ENCODE measurements at regions of chr17 and their contacts with region 1.

Region 1: DNA sequence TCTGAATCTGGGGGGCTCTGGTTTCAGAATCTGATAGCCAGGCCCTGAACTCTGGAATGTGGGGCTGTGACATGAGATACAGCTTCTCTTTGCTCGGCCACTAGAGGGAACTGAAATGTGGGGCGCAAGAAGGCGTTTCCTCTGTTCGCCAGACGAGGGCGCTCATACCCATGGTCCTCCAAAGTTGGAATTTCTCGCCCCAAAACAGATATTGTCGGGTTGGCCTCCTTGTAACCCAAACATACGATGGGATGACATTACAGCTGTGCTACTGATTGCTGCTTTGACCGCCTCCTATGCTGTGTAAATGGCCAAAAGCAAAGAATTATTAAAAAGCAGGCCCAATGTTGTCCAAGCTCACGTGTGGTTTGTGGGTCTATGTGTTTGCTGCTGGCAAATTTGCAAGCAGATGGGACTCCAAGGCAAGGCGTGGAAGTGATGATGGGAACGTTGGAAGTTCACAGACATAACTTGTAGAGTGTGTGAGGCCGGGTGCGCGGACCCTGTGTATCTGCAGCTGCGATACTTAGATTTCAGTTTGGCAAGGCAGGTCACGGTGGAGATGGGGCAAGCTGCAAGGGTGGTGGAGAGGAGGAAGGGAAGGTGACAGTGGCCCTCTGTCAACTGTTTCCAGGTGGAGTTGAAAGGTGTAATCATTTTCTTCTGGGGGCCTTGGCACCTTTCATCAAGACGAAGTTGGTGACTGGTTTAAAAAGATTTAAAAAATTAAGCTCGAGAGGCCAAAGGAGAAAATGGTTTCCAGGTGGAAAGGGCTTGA is 13.0 kb upstream of the MSI2 start:
- DNase-seq: peak; percentile 81
- ATAC-seq: peak; percentile 85
- H3K4me3 Mint-ChIP-seq: no peak overlapping the region
- H3K27ac Mint-ChIP-seq: no peak overlapping the region
- H3K4me1 Mint-ChIP-seq: peaks cover 6% of the 10 kb centered on the region
- H3K27me3 Mint-ChIP-seq: peaks cover 23% of the 10 kb centered on the region

Region 2: GRCh38 chr17:57186226-57187019 is 56.9 kb before region 1 on chr17:
- CTCF ChIA-PET with region 1: no interaction called
- DNase-seq: no peak
- ATAC-seq: no peak
- H3K4me3 Mint-ChIP-seq: no peak overlapping the region
- H3K27ac Mint-ChIP-seq: no peak overlapping the region
- H3K4me1 Mint-ChIP-seq: no peaks in the 10 kb centered on the region
- H3K27me3 Mint-ChIP-seq: peaks cover 10% of the 10 kb centered on the region

Region 3: GRCh38 chr17:57282296-57282695 is 38.9 kb after region 1 on chr17:
- CTCF ChIA-PET with region 1: interaction called, 19 read pairs
- DNase-seq: no peak
- ATAC-seq: no peak
- H3K4me3 Mint-ChIP-seq: peak overlapping the region; percentile 6
- H3K27ac Mint-ChIP-seq: peak overlapping the region; percentile 72
- H3K4me1 Mint-ChIP-seq: peaks cover 86% of the 10 kb centered on the region
- H3K27me3 Mint-ChIP-seq: no peaks in the 10 kb centered on the region

Region 4: GRCh38 chr17:57408071-57408811 is 164.9 kb after region 1 on chr17:
- CTCF ChIA-PET with region 1: interaction called, 33 read pairs
- DNase-seq: peak; percentile 61
- ATAC-seq: peak; percentile 78
- H3K4me3 Mint-ChIP-seq: peak overlapping the region; percentile 11
- H3K27ac Mint-ChIP-seq: peak overlapping the region; percentile 10
- H3K4me1 Mint-ChIP-seq: peaks cover 35% of the 10 kb centered on the region
- H3K27me3 Mint-ChIP-seq: no peaks in the 10 kb centered on the region

Region 5: GRCh38 chr17:57498443-57498842 is 255.1 kb after region 1 on chr17:
- CTCF ChIA-PET with region 1: interaction called, 11 read pairs
- DNase-seq: no peak
- ATAC-seq: no peak
- H3K4me3 Mint-ChIP-seq: no peak overlapping the region
- H3K27ac Mint-ChIP-seq: no peak overlapping the region
- H3K4me1 Mint-ChIP-seq: peaks cover 4% of the 10 kb centered on the region
- H3K27me3 Mint-ChIP-seq: no peaks in the 10 kb centered on the region

Region 6: DNA sequence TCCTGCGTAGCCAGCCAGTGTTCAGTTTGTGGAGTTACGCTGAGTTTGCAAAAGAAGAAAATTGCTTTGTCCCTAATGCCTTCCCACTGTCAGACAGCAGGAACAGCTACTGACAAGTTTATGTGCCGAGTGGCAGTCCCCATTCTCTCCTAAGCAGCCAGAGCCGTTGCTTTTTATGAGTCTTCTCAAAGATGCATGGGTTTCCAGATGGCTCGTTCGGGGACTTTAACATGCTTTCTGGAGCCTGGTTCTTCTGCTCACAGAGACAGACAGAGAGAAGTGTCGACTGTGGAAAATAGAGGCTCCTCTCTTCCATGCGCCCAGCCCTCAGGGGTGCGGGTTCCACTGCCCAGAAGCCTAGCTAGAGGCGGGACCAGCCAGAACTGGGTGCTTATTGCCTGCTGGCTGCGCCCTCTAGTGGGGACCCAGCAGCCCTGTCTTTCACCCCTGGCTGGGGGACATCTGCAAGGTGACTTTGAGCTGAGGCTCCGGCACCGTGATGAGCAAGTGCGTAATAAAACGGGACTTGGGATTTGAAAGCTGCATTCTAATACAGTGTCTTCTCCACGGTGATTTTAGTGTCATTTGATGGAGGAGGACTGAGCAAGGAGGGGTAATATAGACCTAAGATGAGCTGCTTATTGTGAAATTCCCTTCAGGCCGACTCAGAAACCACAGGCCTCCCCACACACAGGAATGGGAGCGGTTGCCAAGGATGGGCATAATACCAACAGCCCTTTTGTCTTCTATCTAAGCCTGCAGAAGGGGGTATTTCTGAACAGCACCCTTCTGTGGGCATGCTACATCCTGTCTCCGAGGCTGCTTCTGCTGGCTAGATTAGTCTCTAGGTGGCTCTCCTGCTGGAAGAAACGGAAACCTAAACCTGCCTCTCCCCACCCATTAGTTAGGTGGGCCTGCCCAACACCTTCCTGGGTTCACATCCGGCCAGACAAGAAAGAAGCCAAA is 428.6 kb after region 1 on chr17:
- CTCF ChIA-PET with region 1: interaction called, 47 read pairs
- DNase-seq: peak; percentile 86
- ATAC-seq: peak; percentile 93
- H3K4me3 Mint-ChIP-seq: peak overlapping the region; percentile 50
- H3K27ac Mint-ChIP-seq: peak overlapping the region; percentile 96
- H3K4me1 Mint-ChIP-seq: peaks cover 47% of the 10 kb centered on the region
- H3K27me3 Mint-ChIP-seq: no peaks in the 10 kb centered on the region

Region 7: DNA sequence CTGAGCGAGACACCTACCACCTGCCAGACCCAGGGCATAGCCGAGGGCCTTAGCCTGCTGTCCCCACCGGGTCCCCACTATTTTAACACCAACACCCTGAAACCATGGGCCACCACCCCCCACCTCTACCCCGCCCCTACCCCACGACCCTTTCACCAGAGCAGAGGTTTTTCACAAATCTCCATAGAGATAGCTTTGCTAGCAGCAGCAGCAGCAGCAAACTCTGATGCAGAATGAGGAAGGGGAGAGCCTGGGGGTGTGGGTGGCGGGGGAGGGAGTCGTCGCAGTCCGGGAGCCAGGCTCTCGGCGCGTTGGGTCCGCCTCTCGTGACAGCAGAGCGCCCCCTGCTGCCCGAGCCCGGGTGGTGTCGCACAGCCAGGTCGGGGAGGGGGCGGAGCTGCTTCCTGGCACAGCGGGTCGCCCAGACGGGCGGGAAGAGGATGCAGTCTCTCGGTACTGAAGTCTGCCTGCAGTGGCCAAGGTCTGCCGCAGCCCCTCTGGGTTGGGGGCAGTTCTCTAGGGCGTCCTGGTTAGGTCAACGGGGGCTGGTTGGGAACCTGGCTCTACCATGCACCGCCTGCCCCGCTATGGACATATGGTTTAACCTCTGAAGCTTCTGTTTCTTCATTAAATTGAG is 539.9 kb after region 1 on chr17:
- CTCF ChIA-PET with region 1: interaction called, 33 read pairs
- DNase-seq: peak; percentile 80
- ATAC-seq: peak; percentile 95
- H3K4me3 Mint-ChIP-seq: no peak overlapping the region
- H3K27ac Mint-ChIP-seq: no peak overlapping the region
- H3K4me1 Mint-ChIP-seq: no peaks in the 10 kb centered on the region
- H3K27me3 Mint-ChIP-seq: peaks cover 38% of the 10 kb centered on the region